Left cardiac atrium (tissue), 4 donors: ENCODE measurements at regions of chr10 and their contacts with region 1.

Region 1: GRCh38 chr10:29443745-29444523 is 155.1 kb downstream of the LYZL1 start:
- DNase-seq: no peak
- ATAC-seq: no peak

Region 2: GRCh38 chr10:29386342-29386999 is 57.5 kb before region 1 on chr10:
- intact Hi-C with region 1: loop called (anchors 5 to 10 kb)
- DNase-seq: no peak
- ATAC-seq: peak in 1 of 2 donors; percentile 46

Region 3: DNA sequence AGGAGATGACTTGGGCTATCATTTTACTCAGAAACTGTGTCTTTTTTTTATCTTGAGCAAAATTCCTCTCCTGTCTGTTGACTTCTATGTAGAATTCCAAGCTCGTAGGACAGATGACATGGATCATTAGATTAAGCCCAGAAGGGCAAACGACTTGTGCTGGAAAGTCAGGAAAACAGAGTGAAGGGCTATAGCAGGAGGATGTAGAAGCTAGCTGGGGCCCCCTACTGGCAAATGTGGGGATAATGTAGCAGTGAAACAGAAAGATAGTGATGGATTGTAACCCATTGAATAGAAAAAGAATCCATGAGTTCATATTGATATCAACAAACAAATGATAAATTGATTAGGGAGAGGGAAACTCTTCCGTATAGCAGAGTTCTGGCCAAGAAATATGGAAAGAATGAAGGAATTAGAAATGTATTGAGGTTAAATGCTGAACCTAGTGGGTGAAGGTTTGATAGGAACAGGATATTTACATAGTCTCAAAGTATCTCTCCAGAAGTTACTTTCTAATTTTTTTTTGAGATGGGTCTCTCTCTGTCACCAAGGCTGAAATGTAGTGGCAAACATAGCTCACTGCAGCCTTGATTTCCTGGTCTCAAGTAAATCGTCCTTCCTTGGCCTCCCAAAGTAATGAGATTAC is 51.4 kb before region 1 on chr10:
- intact Hi-C with region 1: loop called (anchors 5 to 10 kb)
- DNase-seq: peak; percentile 33
- ATAC-seq: peak in 1 of 2 donors; percentile 49

Region 4: GRCh38 chr10:29470355-29470705 is 26.4 kb after region 1 on chr10:
- intact Hi-C with region 1: no loop called
- DNase-seq: peak; percentile 47
- ATAC-seq: peak; percentile 3 to 29